HepG2 (cell line): ENCODE measurements at regions of chr17 and their contacts with region 1.

Region 1: GRCh38 chr17:39621523-39622379 is 5.0 kb upstream of the PPP1R1B start:
- DNase-seq: peak; percentile 80
- ATAC-seq: peak; percentile 67
- H3K4me3 ChIP-seq: no peak overlapping the region
- H3K27ac ChIP-seq: no peak overlapping the region
- H3K4me1 ChIP-seq: peaks cover 47% of the 10 kb centered on the region
- H3K27me3 ChIP-seq: peaks cover 7 to 59% of the 10 kb centered on the region in 2 experiments
- CTCF ChIP-seq: peak; percentile 100
- EP300 ChIP-seq: peak in 1 of 2 experiments; percentile 21; a peak in 1 of 4 replicates
- POLR2A ChIP-seq: no peak
- RAD21 ChIP-seq: peak; percentile 99

Region 2: DNA sequence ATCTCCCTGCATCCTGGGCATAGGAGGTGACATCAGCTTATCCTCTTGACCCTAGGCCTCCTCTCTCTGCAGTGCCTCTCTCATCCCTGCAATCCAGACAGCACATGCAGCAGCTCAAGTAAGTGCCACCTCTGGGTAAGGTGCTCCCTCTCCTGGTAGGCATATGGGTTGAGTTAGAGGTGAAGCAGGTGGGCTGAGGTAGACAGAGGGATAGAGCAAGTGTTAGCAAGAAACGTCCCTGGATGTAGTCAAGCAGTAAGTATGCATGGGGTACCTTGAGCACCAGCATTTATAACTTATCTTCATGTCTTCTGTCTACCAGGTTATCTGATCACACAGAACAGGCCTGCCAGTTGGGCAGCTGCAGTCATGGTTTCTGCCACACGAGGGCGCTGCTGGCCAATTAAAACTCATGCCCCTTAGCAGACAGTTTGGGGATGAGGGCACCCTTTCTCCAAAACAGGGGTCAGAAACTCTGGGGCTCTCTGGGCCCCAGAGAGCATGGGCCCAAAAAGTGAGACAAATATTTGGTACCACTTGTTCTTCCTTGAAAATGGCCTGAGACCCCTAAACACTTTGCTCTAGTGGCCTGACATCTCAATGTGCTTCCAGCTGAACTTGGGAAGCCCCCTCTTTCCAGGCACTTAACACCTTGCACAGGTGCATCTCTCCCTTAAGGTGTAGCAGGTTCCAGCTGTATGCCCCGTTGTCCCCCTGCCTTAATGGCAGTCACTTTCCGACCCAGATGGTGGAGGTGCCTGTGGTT is 73.9 kb before region 1 on chr17:
- CTCF ChIA-PET with region 1: interaction called, 56 read pairs
- POLR2A ChIA-PET with region 1: interaction called, 6 read pairs
- in situ Hi-C with region 1: loop called (anchors 5 kb)
- intact Hi-C with region 1: loop called (anchors 2 kb)
- DNase-seq: peak; percentile 50
- ATAC-seq: peak; percentile 83
- H3K4me3 ChIP-seq: no peak overlapping the region
- H3K27ac ChIP-seq: no peak overlapping the region
- H3K4me1 ChIP-seq: peaks cover 9% of the 10 kb centered on the region; the same call in 1 of the 2 replicates
- H3K27me3 ChIP-seq: no peaks in the 10 kb centered on the region
- CTCF ChIP-seq: peak; percentile 92
- EP300 ChIP-seq: no peak
- POLR2A ChIP-seq: no peak
- RAD21 ChIP-seq: peak; percentile 78

Region 3: DNA sequence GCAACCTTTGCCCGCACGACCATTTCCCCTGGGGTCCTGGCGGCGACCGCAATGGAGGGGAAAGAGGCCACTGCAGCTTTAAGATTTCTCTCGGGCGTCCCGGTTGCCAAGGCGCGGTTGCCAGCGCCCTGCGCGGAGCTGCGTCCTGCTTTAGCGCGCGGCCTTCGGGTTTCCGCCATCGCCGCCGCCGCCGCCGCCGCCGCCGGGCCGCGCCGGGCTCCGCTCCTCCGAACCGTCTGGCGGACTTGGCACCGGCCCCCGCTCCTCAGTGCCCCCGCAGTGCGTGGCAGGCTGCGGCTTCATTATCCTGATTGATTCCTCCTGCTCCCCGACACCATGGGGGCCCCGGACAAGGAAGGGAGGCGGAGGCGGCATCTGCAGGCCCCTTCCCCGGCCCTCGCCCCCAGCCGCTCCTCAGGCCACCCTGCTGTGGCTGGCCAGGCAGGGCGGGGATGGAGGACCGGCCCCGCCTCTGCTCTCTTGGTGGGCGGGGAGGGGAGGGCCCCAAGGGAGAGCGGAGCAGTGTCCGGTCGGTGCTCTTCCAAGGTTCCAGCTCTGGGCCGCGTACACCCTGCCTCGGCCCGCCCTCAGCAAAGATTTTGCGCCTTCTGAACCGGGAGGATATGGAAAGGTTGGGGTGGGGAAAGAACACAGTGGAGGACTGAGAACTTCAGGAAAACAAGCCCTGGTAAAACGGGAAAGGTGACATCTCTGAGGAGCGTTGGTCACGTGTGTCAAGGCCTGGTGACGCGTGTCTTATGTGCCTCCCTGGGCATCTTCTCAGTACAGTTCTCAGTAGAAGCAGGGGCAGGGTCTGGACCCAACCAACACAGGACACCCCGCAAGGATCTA is 48.1 kb before region 1 on chr17:
- CTCF ChIA-PET with region 1: no interaction called
- POLR2A ChIA-PET with region 1: no interaction called
- in situ Hi-C with region 1: no loop called
- intact Hi-C with region 1: no loop called
- DNase-seq: peak; percentile 20
- ATAC-seq: peak; percentile 87
- H3K4me3 ChIP-seq: peak overlapping the region; percentile 69 to 75 (median 69)
- H3K27ac ChIP-seq: no peak overlapping the region
- H3K4me1 ChIP-seq: peaks cover 15% of the 10 kb centered on the region
- H3K27me3 ChIP-seq: peaks cover 2 to 21% of the 10 kb centered on the region in 2 experiments; a peak in 2 of 5 replicates
- CTCF ChIP-seq: no peak
- EP300 ChIP-seq: no peak
- POLR2A ChIP-seq: no peak
- RAD21 ChIP-seq: no peak; the same call in 1 of the 2 replicates

Region 4: GRCh38 chr17:39636927-39637736 is 15.4 kb after region 1 on chr17 and contains the start of gene STARD3:
- CTCF ChIA-PET with region 1: interaction called, 70 read pairs
- POLR2A ChIA-PET with region 1: interaction called, 7 read pairs
- in situ Hi-C with region 1: no loop called
- intact Hi-C with region 1: loop called (anchors 1 kb)
- DNase-seq: peak; percentile 83
- ATAC-seq: peak; percentile 93
- H3K4me3 ChIP-seq: peak within 1 kb of the TSS; percentile 87 to 94 (median 88)
- H3K27ac ChIP-seq: peak within 1 kb of the TSS; percentile 80
- H3K4me1 ChIP-seq: peaks cover 77% of the 10 kb centered on the region
- H3K27me3 ChIP-seq: peaks cover 3 to 15% of the 10 kb centered on the region in 2 experiments; a peak in 3 of 5 replicates
- CTCF ChIP-seq: peak; percentile 66
- EP300 ChIP-seq: no peak
- POLR2A ChIP-seq: peak; percentile 63 to 84
- RAD21 ChIP-seq: peak; percentile 60
- total RNA-seq, gene STARD3: 17.2 and 34.6 TPM in 2 replicates

Region 5: DNA sequence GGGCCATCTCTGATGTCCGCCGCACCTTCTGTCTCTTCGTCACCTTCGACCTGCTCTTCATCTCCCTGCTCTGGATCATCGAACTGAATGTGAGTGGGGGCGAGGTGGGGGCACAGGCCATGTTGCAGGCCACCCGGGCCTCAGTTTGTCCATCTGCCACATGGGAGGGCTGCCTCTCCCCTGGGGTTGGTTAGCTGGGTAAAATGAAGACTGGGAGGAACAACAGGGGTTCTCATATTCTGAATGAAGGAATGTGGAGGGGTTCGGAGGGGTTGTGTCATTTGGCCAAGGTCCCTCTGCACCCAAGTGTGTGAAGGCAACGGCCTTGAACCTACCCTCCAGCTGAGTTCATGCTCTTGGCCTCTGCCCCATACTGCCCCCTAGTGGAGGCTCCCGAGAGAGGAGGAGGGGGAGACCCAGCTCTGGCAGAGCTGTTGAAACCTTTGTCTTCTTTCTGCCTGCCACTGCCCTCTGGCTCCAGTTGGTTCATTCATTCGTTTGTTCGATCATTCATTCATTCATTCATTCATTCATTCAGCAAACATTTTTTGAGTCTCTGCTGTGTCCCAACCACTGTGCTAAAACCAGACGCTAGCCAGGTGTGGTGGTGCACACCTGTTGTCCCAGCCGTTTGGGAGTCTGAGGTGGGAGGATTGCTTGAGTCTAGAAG is 32.0 kb after region 1 on chr17:
- CTCF ChIA-PET with region 1: interaction called, 71 read pairs
- POLR2A ChIA-PET with region 1: interaction called, 5 read pairs
- in situ Hi-C with region 1: no loop called
- intact Hi-C with region 1: loop called (anchors 2 kb)
- DNase-seq: peak; percentile 79
- ATAC-seq: peak; percentile 65
- H3K4me3 ChIP-seq: peak overlapping the region in 1 of 3 experiments; percentile 54; a peak in 1 of 6 replicates
- H3K27ac ChIP-seq: peak overlapping the region; percentile 48
- H3K4me1 ChIP-seq: peaks cover 31% of the 10 kb centered on the region
- H3K27me3 ChIP-seq: no peaks in the 10 kb centered on the region
- CTCF ChIP-seq: peak; percentile 93
- EP300 ChIP-seq: peak in 1 of 2 experiments; percentile 53; a peak in 1 of 4 replicates
- POLR2A ChIP-seq: no peak
- RAD21 ChIP-seq: peak; percentile 76

Region 6: DNA sequence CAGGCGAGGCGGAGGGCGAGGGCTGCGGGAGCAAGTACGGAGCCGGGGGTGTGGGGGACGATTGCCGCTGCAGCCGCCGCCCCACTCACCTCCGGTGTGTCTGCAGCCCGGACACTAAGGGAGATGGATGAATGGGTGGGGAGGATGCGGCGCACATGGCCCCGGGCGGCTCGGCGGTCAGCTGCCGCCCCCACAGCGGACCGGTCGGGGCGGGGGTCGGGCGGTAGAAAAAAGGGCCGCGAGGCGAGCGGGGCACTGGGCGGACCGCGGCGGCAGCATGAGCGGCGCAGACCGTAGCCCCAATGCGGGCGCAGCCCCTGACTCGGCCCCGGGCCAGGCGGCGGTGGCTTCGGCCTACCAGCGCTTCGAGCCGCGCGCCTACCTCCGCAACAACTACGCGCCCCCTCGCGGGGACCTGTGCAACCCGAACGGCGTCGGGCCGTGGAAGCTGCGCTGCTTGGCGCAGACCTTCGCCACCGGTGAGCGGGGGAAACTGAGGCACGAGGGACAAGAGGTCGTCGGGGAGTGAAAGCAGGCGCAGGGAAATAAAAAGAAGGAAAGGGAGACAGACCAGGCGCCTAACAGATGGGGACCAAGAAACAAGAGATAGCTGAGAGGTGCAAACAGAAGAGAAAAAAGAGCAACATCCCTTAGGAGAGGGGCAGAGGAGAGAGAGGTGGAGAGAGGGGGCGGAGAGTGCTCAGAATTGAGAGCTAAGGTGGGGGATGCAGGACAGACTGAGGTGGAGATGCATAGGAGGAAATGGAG is 46.6 kb after region 1 on chr17 and contains the start of gene PNMT:
- CTCF ChIA-PET with region 1: interaction called, 136 read pairs
- POLR2A ChIA-PET with region 1: interaction called, 8 read pairs
- in situ Hi-C with region 1: loop called (anchors 5 kb)
- intact Hi-C with region 1: loop called (anchors 2 kb)
- DNase-seq: peak; percentile 56
- ATAC-seq: peak; percentile 39
- H3K4me3 ChIP-seq: peak within 1 kb of the TSS; percentile 24 to 66 (median 46); a peak in 5 of 6 replicates
- H3K27ac ChIP-seq: no peak within 1 kb of the TSS
- H3K4me1 ChIP-seq: peaks cover 77% of the 10 kb centered on the region
- H3K27me3 ChIP-seq: peaks cover 11 to 51% of the 10 kb centered on the region in 2 experiments
- CTCF ChIP-seq: peak; percentile 94
- EP300 ChIP-seq: no peak
- POLR2A ChIP-seq: no peak
- RAD21 ChIP-seq: peak; percentile 85
- total RNA-seq, gene PNMT: not detected in 2 replicates

Region 7: DNA sequence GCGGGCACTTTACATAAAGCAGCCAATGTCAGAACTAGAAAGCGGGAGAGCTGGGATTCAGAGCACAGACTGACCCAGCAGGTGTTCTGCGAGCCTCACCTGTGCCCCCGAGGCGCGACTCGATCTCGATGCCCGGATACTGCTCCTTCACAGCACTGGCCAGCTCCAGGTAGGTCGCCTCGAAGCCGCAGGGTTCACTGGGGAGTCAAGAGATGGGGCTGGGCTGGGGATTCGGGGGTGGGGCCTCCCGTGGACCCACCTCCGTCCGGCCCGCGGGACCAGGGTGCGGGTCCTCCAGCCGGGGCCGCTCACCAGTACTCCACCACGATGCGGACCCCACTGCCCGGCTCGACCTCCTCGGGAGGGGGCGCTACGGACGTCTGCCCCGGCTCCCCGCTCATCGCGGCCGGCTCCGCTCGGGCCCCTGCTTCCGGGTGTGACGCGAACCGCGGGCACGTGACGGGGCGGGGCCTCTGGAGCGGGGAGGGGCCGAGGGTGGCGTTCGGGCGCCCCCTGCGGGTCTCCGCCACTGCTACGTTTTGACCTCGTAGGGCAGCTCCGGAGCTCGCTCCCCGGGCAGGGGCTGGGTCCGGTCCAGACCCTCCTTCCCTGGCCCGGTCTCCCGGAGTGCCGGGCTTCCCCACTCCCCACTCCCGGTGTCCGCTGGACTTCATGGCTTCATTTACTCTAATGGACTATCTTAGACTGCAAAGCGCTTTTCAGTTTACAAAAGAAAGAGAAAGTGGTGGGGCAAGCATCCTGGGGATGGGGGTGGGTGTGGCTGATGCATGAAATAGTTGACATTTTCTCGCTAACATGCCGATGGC is 108.6 kb after region 1 on chr17 and contains the start of gene MIEN1:
- CTCF ChIA-PET with region 1: interaction called, 14 read pairs
- POLR2A ChIA-PET with region 1: interaction called, 6 read pairs
- in situ Hi-C with region 1: no loop called
- intact Hi-C with region 1: no loop called
- DNase-seq: peak; percentile 78
- ATAC-seq: peak; percentile 89
- H3K4me3 ChIP-seq: peak within 1 kb of the TSS; percentile 68 to 81 (median 74)
- H3K27ac ChIP-seq: peak within 1 kb of the TSS; percentile 65
- H3K4me1 ChIP-seq: peaks cover 21% of the 10 kb centered on the region
- H3K27me3 ChIP-seq: no peaks in the 10 kb centered on the region
- CTCF ChIP-seq: peak; percentile 93
- EP300 ChIP-seq: 0 out of 4 replicates have a peak, but pooled peaks have one; percentile 3 to 49
- POLR2A ChIP-seq: peak; percentile 56 to 84
- RAD21 ChIP-seq: peak; percentile 97
- total RNA-seq, gene MIEN1: 40.6 and 48.6 TPM in 2 replicates

Region 8: GRCh38 chr17:39754161-39754951 is 132.6 kb after region 1 on chr17:
- CTCF ChIA-PET with region 1: interaction called, 57 read pairs
- POLR2A ChIA-PET with region 1: interaction called, 3 read pairs
- in situ Hi-C with region 1: loop called (anchors 5 kb)
- intact Hi-C with region 1: loop called (anchors 2 kb)
- DNase-seq: peak; percentile 87
- ATAC-seq: peak; percentile 81
- H3K4me3 ChIP-seq: peak overlapping the region; percentile 63 to 80 (median 73)
- H3K27ac ChIP-seq: peak overlapping the region; percentile 29
- H3K4me1 ChIP-seq: peaks cover 80% of the 10 kb centered on the region
- H3K27me3 ChIP-seq: peaks cover 6 to 43% of the 10 kb centered on the region in 2 experiments
- CTCF ChIP-seq: peak; percentile 95
- EP300 ChIP-seq: peak in 1 of 2 experiments; percentile 5; a peak in 1 of 4 replicates
- POLR2A ChIP-seq: peak in 1 of 2 experiments; percentile 67
- RAD21 ChIP-seq: peak; percentile 100